ENCODE measurements at regions of chr14 and their contacts with region 1.

Region 1: DNA sequence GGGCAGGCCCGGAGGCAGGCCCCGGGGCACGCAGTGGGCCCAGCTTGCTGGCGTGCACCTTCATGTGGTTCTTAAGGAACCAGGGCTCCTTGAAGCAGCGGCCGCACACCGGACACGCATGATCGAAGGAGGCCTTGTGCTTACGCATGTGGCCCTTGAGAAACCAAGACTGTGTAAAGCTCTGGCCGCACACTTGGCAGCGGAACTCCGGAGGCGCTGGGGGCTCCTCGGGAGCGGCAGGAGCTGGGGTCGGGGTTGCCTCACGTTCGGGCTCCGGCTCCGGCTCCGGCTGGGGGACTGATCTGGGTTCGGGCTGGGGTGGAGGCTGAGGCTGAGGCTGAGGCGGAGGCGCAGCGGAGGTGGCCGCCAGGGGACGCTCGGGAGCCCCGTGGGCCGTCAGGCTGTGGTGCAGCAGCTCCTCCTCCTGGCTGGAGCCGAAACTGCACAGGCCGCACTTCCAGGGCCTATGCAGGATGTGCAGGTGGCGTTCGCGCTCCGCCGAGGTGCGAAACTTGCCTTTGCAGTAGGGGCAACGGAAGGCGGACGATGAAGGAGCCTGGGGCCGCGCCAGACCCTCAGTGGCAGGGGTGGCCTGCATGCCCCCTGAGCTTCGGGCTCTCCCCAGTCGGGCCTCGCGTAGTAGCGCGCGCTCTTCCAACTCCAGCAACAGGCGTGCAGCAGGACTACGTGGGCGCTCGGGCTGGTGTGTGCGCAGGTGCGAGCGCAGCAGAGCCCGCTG is 6.0 kb downstream of the ZNF219 start:
- DNase-seq: peak; percentile 93
- H3K4me3 Mint-ChIP-seq: no peak overlapping the region
- H3K27ac Mint-ChIP-seq: no peak overlapping the region
- H3K4me1 Mint-ChIP-seq: peaks cover 13% of the 10 kb centered on the region
- H3K27me3 Mint-ChIP-seq: no peaks in the 10 kb centered on the region

Region 2: DNA sequence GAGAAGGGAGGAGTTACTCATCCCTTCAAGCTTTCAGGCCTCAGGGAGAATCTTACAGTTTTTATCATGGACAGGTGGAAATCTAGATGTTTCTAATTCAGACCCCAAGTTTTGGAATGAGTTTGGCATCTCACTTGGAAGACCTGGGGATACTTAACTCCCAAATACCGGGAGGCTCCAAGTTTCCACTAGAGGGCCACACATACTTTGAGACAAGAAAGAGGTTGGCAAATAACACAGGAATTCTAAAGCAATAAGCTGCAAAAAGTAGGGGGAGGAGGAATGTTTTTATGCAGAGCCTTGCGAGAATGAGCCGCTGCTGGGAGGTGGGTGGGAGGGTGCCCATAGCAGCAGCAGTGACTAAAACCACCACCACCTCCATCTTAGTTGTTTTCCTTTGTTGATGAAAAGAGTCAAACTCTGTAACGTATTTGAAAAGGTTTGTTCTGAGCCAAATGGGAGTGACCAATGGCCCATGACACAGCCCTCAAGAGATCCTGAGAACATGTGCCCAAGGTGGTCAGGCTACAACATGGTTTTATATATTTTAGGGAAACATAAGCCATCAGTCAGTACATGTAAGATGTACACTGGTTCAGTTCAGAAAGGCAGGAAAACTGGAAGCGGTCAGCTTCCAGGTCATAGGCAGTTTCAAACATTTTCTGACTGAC is 255.6 kb before region 1 on chr14:
- CTCF ChIA-PET with region 1: no interaction called
- intact Hi-C with region 1: no loop called
- DNase-seq: no peak
- H3K4me3 Mint-ChIP-seq: no peak overlapping the region
- H3K27ac Mint-ChIP-seq: no peak overlapping the region
- H3K4me1 Mint-ChIP-seq: no peaks in the 10 kb centered on the region
- H3K27me3 Mint-ChIP-seq: no peaks in the 10 kb centered on the region

Region 3: GRCh38 chr14:21003788-21004346 is 88.6 kb before region 1 on chr14:
- CTCF ChIA-PET with region 1: interaction called, 17 read pairs
- intact Hi-C with region 1: no loop called
- DNase-seq: no peak
- H3K4me3 Mint-ChIP-seq: no peak overlapping the region
- H3K27ac Mint-ChIP-seq: no peak overlapping the region
- H3K4me1 Mint-ChIP-seq: no peaks in the 10 kb centered on the region
- H3K27me3 Mint-ChIP-seq: no peaks in the 10 kb centered on the region

Region 4: GRCh38 chr14:21024585-21025370 is 67.7 kb before region 1 on chr14 and contains the start of gene NDRG2:
- CTCF ChIA-PET with region 1: interaction called, 15 read pairs
- intact Hi-C with region 1: no loop called
- DNase-seq: peak; percentile 68
- H3K4me3 Mint-ChIP-seq: peak within 1 kb of the TSS; percentile 72
- H3K27ac Mint-ChIP-seq: no peak within 1 kb of the TSS
- H3K4me1 Mint-ChIP-seq: peaks cover 10% of the 10 kb centered on the region
- H3K27me3 Mint-ChIP-seq: no peaks in the 10 kb centered on the region
- total RNA-seq, gene NDRG2: 8.4 to 8.8 TPM

Region 5: DNA sequence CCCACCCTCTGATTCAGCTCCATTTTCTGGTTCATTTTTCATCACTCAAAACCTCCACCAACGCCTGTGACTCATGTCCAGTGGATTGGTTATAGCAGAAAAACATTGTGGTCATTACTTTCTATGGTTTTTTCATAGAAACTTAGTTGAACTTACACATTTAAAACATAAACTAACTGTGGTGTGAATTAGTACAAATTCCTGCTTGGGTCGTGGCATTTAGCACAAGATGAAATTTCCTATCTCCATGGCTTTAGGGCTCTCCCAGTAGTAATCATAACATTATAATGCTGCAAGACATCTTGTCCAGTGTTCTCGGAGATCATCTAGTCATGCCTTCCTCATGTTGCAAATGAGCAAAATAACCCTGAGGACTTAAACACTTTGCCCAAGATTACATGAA is 43.2 kb before region 1 on chr14:
- CTCF ChIA-PET with region 1: interaction called, 16 read pairs
- intact Hi-C with region 1: no loop called
- DNase-seq: no peak
- H3K4me3 Mint-ChIP-seq: no peak overlapping the region
- H3K27ac Mint-ChIP-seq: no peak overlapping the region
- H3K4me1 Mint-ChIP-seq: peaks cover 6% of the 10 kb centered on the region
- H3K27me3 Mint-ChIP-seq: no peaks in the 10 kb centered on the region

Region 6: DNA sequence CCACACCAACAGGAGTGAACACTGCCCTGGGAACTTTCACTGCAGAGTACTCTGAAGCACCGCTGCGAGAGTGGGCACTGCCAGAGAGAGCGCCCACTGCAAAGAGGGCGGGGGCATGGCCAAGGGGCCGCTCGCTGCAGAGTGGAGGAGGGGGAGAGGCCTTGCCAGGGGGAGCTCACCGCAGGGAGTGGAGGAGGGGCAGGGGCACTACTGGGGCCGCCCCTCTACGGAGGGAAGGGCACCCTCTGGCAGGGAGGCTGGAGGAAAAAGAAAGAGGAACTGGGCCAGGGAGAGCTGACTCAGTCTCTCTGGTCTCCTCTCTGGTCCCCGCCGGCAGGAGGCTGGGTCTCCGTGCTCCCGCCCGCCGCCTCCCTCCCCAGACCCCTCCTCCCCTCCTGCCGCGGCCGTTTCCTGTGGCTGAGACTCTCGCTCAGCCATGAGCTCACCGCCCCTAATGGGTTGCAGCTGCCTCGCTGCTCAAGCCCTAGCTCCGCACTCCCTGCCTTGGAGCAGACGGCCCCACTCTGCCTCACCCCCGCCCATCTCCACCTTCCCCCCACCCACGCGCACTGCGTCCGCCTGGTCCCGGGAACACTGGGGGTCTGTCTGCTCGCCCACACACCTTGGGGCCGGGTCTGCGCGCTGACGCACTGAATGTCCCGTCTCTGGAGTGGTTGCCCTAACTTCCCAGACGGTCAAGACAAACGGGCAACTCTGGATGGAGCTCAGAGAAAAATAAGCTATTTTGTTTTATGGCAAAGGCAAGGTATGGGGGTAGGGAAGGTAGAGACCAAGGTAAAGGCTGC is 21.0 kb before region 1 on chr14:
- CTCF ChIA-PET with region 1: interaction called, 60 read pairs
- intact Hi-C with region 1: loop called (anchors 1 kb)
- DNase-seq: peak; percentile 84
- H3K4me3 Mint-ChIP-seq: peak overlapping the region; percentile 65
- H3K27ac Mint-ChIP-seq: no peak overlapping the region
- H3K4me1 Mint-ChIP-seq: peaks cover 29% of the 10 kb centered on the region
- H3K27me3 Mint-ChIP-seq: peaks cover 55% of the 10 kb centered on the region

Region 7: GRCh38 chr14:21078287-21078686 is 14.2 kb before region 1 on chr14:
- CTCF ChIA-PET with region 1: interaction called, 60 read pairs
- intact Hi-C with region 1: no loop called
- DNase-seq: no peak
- H3K4me3 Mint-ChIP-seq: no peak overlapping the region
- H3K27ac Mint-ChIP-seq: no peak overlapping the region
- H3K4me1 Mint-ChIP-seq: no peaks in the 10 kb centered on the region
- H3K27me3 Mint-ChIP-seq: peaks cover 4% of the 10 kb centered on the region

Region 8: DNA sequence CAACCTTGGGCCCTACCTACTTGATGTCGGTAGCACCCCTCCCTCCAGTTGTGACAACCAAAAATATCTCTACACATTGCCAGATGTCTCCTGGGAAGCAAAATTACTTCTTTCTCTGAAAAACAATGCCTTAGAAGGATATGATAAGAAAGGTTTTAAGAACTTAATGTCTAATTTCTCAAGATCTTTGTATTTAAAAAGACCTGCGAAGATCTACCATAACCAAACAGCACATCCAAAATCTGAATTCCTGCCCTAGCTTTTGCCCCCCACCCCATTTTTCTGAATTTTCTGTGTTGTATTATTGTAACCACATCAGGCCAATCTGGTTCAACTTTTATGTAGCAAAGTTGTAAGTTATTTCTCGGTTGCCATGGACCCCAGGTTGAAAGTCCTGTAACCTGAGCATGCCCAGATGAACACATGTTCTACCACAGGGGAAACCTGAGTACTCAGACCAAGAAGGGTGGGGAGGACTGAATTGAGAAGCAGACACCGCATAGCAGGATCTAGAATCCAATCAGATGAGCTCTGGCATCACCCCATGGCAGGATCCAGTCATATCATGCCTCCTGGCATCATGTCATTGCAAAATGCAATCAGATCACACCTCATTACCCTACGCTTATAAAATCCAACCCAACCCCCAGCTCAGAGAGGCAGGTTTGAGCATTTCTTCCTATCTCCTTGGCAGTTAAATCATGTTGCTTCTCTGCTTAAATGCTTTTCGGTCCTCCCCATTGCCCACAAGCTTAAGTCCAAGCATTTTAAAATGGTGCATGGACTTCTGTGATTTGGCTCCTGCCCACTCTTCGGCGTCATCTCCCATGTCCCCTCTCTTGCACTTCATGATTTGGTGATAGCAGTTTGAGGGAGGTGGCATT is 17.2 kb after region 1 on chr14:
- CTCF ChIA-PET with region 1: interaction called, 168 read pairs
- intact Hi-C with region 1: loop called (anchors 1 kb)
- DNase-seq: peak; percentile 71
- H3K4me3 Mint-ChIP-seq: no peak overlapping the region
- H3K27ac Mint-ChIP-seq: peak overlapping the region; percentile 7
- H3K4me1 Mint-ChIP-seq: peaks cover 20% of the 10 kb centered on the region
- H3K27me3 Mint-ChIP-seq: no peaks in the 10 kb centered on the region

Region 9: GRCh38 chr14:21840765-21841164 is 748.3 kb after region 1 on chr14:
- CTCF ChIA-PET with region 1: no interaction called
- intact Hi-C with region 1: no loop called
- DNase-seq: no peak
- H3K4me3 Mint-ChIP-seq: peak overlapping the region; percentile 65
- H3K27ac Mint-ChIP-seq: peak overlapping the region; percentile 73
- H3K4me1 Mint-ChIP-seq: peaks cover 7% of the 10 kb centered on the region
- H3K27me3 Mint-ChIP-seq: peaks cover 4% of the 10 kb centered on the region